Posterior cingulate gyrus (tissue), 11 donors: ENCODE measurements at regions of chr22 and their contacts with region 1.

Region 1: DNA sequence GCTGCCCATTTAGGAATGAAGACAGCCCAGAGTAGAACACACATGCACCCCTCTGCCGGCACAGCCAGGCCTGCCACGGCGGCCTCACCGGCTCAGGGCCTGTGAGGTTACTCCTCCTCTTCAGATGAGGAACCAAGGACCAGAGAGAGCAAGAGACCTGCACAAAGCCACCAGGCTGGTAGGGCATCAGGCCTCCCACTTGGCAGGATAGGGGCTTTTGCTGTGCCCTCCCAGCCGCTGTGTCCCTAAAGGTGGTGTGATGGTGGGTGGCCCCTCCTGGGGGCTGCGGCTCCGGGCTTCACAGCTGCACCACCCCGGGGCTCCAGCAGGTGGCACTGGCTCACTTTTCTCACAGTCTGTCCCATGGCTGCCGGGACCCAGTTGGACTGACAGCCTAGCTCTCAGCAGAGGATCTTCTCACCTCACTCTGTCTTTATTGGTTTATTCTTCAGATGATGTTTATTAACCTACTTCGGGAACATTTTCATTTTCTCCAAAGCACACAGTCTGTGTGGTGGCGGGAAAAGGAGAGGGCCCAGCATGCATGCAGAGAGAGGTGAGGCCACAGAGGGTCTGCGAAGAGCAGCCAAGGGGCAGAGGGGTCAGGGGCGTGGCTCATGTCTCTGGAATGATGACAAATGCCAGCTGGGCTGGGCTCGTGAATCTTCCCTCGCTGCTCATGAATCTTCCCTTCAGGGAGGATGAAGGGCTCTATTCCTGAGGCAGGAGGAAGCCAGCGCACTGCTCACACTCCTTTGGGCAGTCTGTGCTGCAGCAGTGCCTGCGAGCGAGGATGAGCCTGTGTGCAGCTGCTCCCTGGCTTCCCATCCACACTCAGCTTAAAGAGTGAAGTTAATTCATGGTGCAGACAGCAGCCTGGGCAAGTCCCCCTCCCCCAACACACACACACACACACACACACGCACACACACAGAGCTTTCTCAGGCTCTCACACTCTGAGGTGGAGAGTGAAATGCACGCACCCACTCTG is 101.1 kb upstream of the PITPNB start:
- DNase-seq: peak; percentile 59 to 97 (median 82)

Region 2: DNA sequence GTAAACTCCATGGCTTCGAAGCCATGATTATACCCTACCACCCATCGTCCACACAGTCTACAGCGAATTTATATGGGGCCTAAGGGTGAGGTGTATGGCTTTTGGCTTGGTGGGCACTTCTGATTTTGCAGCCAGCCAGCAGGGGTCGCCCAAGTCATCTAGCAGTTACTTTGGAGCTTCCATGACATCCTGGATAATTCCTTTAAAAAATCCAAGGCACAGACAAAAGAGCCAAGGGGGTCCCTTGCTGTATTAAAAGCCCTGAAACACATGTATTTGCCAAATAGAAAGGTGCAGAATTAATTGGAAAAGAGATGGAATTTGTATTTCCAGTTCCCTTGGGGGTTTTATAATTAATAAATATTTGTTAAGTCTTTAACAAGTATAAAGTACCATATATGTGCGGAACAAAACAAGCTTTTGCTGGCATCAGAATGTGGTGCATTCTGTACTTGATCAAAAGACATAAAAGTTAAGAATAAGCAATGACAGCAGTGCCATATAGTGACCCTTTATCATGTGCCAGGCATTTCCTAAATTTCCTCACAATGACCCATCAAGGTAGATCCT is 31.7 kb after region 1 on chr22:
- intact Hi-C with region 1: loop called (anchors 2 kb)
- DNase-seq: peak; percentile 43 to 95 (median 74)

Region 3: DNA sequence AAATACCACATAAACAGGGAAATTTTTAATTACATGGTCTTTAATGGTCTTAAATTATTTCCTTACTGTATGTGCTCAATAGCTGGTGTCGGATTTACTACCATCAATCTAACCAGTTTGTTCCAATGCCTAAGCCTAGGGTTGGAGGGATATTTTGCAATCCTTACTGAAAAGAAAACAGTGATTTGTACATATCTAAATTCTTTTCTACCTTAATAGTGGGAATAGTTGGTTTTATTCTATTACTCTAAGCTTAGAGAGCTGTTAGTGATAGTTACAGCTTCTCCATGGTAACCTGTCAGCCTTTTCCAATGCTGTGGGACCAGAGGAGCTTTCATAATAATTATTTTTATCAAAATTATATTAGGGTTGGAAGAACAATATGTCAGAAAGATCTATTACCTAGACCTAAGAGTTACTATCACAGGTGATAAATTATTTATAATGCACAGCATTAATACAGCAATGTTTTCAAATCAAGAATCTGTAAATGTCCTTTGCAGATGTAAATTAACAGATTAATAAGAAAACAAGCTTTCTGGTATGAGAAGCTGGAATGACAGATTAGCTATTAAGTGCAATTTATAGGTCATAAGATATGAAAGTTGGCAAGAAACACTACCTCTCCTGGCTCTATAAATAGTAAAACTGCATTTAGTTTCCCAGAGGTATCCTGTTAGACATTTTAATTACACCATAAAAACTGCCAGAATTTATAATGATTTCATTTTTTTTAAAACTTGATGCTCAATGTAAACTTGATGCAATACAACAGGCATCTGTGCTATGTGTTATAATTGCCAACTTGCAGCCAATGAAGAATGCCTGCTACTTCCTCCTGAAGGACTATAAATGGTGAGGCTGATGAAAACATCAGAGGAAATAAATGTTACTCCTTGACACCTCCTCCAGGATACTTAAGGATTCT is 160.9 kb after region 1 on chr22:
- intact Hi-C with region 1: no loop called
- DNase-seq: no peak

Region 4: GRCh38 chr22:28442264-28442710 is 422.1 kb after region 1 on chr22:
- intact Hi-C with region 1: loop called (anchors 1 kb)
- DNase-seq: peak; percentile 60 to 96 (median 77)

Region 5: GRCh38 chr22:28594797-28595462 is 574.8 kb after region 1 on chr22:
- intact Hi-C with region 1: loop called (anchors 1 kb)
- DNase-seq: no peak

Region 6: GRCh38 chr22:28829358-28830181 is 809.4 kb after region 1 on chr22:
- intact Hi-C with region 1: loop called (anchors 10 kb)
- DNase-seq: peak; percentile 40 to 95 (median 78)